ENCODE measurements at regions of chr16 and their contacts with region 1.

Region 1: GRCh38 chr16:24041826-24042631 is 206.2 kb downstream of the PRKCB start:
- DNase-seq: peak; percentile 56 to 67 (median 59)
- ATAC-seq: peak; percentile 74 to 89 (median 82)
- H3K4me3 ChIP-seq: no peak overlapping the region
- H3K27ac ChIP-seq: no peak overlapping the region
- H3K4me1 ChIP-seq: no peaks in the 10 kb centered on the region
- H3K27me3 ChIP-seq: no peaks in the 10 kb centered on the region
- CTCF ChIP-seq: peak; percentile 54 to 77 (median 66)
- POLR2A ChIP-seq: no peak

Region 2: DNA sequence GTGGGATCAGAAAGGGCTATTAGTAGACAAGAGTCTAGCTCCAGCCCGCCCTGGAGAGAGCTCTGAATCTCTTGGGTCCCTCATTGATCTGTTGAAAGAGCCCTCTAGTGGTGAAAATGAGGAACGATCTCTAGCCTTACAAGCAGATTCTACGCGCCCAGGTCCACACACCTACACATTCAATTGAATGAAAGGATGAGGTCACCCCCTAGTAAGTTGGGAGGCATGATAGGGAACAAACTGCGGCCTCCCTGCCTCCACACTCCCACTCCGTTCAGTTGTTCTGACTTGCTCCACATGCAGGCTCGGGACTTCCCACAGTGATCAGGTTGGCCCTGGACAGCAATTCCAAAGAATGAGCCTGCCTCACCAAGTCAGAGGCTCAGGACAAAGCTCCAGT is 211.2 kb after region 1 on chr16:
- intact Hi-C with region 1: loop called in 1 of 2 experiments (anchors 10 kb)
- DNase-seq: peak in 1 of 3 donors; percentile 22
- ATAC-seq: peak; percentile 74 to 86 (median 84)
- H3K4me3 ChIP-seq: no peak overlapping the region
- H3K27ac ChIP-seq: no peak overlapping the region
- H3K4me1 ChIP-seq: no peaks in the 10 kb centered on the region
- H3K27me3 ChIP-seq: no peaks in the 10 kb centered on the region
- CTCF ChIP-seq: peak; percentile 40 to 76 (median 71)
- POLR2A ChIP-seq: no peak

Region 3: GRCh38 chr16:24488045-24488444 is 446.0 kb after region 1 on chr16:
- intact Hi-C with region 1: loop called in 1 of 2 experiments (anchors 5 kb)
- DNase-seq: no peak
- ATAC-seq: no peak
- H3K4me3 ChIP-seq: no peak overlapping the region
- H3K27ac ChIP-seq: no peak overlapping the region
- H3K4me1 ChIP-seq: no peaks in the 10 kb centered on the region
- H3K27me3 ChIP-seq: no peaks in the 10 kb centered on the region
- CTCF ChIP-seq: no peak
- POLR2A ChIP-seq: no peak

Region 4: DNA sequence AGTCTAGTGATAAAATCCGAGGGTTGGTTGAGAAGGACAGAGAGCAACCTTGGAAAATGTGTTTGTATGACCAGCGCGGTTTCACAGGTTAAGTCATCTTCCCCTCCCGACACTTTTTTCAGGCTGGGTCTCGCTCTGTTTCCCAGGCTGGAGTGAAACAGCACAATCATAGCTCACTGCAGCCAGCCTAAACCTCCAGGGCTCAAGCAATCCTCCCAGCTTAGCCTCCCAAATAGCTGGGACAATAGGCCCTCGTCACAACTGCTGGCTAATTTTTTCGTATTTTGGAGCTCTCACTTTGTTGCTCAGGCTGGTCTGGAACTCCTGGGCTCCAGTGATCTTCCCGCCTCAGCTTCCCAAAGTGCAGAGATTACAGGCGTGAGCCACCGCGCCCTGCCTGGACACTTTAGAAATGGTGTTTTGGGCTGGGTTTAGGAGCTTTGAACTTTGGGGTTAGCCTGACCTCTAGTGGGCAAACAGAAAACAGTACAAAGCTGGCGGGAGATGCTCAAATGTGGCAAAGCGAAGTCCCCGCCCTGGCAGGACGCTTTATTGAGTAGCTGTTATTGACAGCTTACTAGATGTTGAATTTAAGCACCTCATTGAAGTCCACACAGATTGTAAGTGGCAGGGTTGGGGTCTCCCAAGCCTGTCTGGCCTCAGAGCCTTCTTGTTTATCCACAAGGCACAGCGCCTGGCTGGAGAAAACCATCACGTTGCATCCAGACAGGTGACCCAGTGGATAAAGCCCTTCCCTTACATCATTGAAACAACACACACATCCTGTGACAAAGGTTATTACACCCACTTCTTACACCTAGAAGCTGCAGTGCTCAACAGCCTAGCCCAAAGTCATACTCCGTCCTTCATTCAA is 462.7 kb after region 1 on chr16:
- intact Hi-C with region 1: loop called in 1 of 2 experiments (anchors 10 kb)
- DNase-seq: peak; percentile 27 to 67 (median 52)
- ATAC-seq: peak; percentile 95 to 99 (median 97)
- H3K4me3 ChIP-seq: no peak overlapping the region
- H3K27ac ChIP-seq: no peak overlapping the region
- H3K4me1 ChIP-seq: no peaks in the 10 kb centered on the region
- H3K27me3 ChIP-seq: no peaks in the 10 kb centered on the region
- CTCF ChIP-seq: peak; percentile 69 to 83 (median 80)
- POLR2A ChIP-seq: no peak